ENCODE measurements at regions of chr20 and their contacts with region 1.

Region 1: DNA sequence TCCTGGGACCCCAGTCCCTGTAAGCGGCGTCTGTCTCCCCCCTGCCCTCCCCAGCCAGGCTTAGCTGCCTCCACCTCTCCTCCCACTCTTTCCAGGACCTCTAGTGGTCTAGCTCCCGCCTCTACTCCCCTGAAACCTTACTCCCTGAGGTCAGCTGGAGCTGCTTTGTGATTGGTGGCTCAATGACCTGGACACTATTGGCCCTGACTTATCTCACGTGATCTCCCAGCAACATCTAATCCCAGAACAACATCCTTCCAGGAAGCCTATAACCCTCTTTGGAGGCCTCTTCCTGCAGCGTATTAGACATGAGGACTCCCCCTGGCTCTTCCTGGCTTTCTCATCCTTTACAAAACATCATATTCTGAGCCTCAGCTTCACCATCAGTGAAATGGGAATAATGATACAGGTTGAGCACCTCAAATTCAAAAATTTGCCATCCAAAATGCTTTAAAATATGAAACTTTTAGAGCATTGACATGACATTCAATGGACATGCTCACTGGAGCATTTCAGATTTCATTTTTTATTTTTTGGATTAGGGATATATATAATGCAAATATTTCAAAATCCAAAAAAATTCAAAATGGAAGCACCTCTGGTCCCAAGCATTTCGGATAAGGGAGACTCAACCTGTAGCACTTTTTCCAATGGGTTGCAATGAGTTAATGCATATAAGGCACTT is 16.3 kb upstream of the SRC start:
- DNase-seq: no peak
- H3K4me3 ChIP-seq: no peak overlapping the region
- H3K27ac ChIP-seq: peak overlapping the region in 1 of 2 experiments; percentile 13; a peak in 1 of 4 replicates
- H3K4me1 ChIP-seq: peaks cover 0 to 44% of the 10 kb centered on the region in 2 experiments; a peak in 2 of 4 replicates
- H3K27me3 ChIP-seq: no peaks in the 10 kb centered on the region
- CTCF ChIP-seq: no peak
- EP300 ChIP-seq: no peak
- RAD21 ChIP-seq: no peak

Region 2: GRCh38 chr20:37316116-37316774 is 13.4 kb before region 1 on chr20:
- CTCF ChIA-PET with region 1: interaction called, 21 read pairs
- POLR2A ChIA-PET with region 1: interaction called, 5 read pairs
- DNase-seq: no peak
- H3K4me3 ChIP-seq: no peak overlapping the region
- H3K27ac ChIP-seq: peak overlapping the region in 1 of 2 experiments; percentile 98; a peak in 2 of 4 replicates
- H3K4me1 ChIP-seq: peaks cover 0 to 75% of the 10 kb centered on the region in 2 experiments; a peak in 2 of 4 replicates
- H3K27me3 ChIP-seq: no peaks in the 10 kb centered on the region
- CTCF ChIP-seq: no peak
- EP300 ChIP-seq: no peak
- RAD21 ChIP-seq: no peak

Measured in SK-N-SH (cell line).